Heart right ventricle (tissue), 16 donors: ENCODE measurements at regions of chrX and their contacts with region 1.

Region 1: GRCh38 chrX:153763989-153764755 is at the start of gene PLXNB3:
- DNase-seq: peak; percentile 62 to 77
- ATAC-seq: peak; percentile 74 to 93 (median 83)
- H3K4me3 ChIP-seq: peak within 1 kb of the TSS in 3 of 10 donors; percentile 23 to 33 (median 24)
- H3K27ac ChIP-seq: peak within 1 kb of the TSS in 7 of 10 donors; percentile 10 to 52 (median 39)
- H3K4me1 ChIP-seq: peaks cover 3 to 23% (median 15%) of the 10 kb centered on the region in 9 donors
- H3K27me3 ChIP-seq: peaks cover 0 to 11% (median 0%) of the 10 kb centered on the region in 7 donors
- CTCF ChIP-seq: peak; percentile 48 to 87 (median 75)
- total RNA-seq, gene PLXNB3: 2.1 to 5.8 (median 4.3) TPM

Region 2: DNA sequence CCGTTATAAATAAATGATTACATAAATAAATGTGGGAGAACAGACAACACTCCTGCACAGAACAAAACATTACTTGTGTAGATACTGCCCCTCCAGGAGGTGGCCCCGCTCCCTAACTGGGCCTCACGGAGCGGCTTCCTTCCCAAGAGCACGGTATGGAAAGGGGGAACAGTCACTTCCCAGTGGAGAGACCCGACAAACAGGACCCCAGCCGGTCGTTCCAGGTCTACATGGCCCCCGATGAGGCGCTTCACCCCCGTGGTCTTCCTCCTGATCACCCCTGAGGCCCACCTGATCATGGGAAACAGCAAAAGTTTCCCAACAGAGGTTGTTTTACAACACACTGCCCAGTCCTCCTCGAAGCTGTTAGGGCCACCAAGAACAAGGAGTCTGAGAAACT is 83.0 kb before region 1 on chrX:
- intact Hi-C with region 1: no loop called
- DNase-seq: no peak
- ATAC-seq: no peak
- H3K4me3 ChIP-seq: no peak overlapping the region
- H3K27ac ChIP-seq: no peak overlapping the region
- H3K4me1 ChIP-seq: no peaks in the 10 kb centered on the region
- H3K27me3 ChIP-seq: peaks cover 0 to 66% (median 0%) of the 10 kb centered on the region in 7 donors
- CTCF ChIP-seq: no peak

Region 3: DNA sequence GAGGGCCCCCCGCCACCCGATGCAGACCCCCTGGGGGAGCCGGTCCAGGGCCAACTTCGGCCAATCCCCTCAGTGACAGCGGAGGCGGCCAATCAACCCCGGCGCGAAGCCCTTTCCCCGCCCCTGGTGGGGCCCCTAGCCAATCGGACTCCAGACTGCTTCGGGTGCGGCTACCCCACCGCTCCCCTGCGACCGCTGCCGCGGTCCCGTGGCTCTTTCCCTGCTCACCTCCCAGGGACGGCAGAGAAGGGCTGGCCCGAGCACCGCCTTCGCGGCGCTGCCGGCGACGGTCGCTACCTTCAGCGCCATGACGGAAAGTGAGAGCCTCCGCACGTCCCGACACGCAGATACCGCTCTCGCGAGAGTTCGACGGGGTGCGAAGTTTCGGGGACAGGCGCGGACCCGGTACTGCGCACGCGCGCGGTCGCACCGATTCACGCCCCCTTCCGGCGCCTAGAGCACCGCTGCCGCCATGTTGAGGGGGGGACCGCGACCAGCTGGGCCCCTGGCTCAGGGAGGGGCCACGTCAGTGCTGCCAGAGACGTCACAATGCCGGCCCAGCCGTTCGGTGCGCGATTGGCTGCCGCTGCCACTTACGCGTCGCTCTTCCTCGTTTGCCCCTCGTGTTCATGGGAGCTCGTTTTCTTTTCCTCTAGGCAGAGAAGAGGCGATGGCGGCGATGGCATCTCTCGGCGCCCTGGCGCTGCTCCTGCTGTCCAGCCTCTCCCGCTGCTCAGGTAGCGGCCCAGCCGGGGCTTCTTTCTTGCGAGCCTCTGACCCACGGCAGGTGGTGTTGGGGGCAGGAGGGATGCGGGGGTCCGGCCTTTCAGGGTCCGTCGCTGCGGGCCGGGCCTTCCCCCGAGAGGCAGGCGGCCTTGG is 30.1 kb after region 1 on chrX and contains the starts of genes IDH3G and SSR4:
- intact Hi-C with region 1: loop called in 1 of 10 experiments (anchors 2 kb)
- DNase-seq: peak; percentile 91 to 93
- ATAC-seq: peak; percentile 93 to 97 (median 96)
- H3K4me3 ChIP-seq: peak within 1 kb of the TSS; percentile 53 to 80 (median 75)
- H3K27ac ChIP-seq: peak within 1 kb of the TSS; percentile 88 to 97 (median 94)
- H3K4me1 ChIP-seq: peaks cover 0 to 44% (median 26%) of the 10 kb centered on the region in 9 donors
- H3K27me3 ChIP-seq: no peaks in the 10 kb centered on the region
- CTCF ChIP-seq: peak in 7 of 9 donors; percentile 7 to 54 (median 31)
- total RNA-seq, gene IDH3G: 58.7 to 86.9 (median 74.5) TPM
- total RNA-seq, gene SSR4: 94.1 to 227 (median 144) TPM

Region 4: DNA sequence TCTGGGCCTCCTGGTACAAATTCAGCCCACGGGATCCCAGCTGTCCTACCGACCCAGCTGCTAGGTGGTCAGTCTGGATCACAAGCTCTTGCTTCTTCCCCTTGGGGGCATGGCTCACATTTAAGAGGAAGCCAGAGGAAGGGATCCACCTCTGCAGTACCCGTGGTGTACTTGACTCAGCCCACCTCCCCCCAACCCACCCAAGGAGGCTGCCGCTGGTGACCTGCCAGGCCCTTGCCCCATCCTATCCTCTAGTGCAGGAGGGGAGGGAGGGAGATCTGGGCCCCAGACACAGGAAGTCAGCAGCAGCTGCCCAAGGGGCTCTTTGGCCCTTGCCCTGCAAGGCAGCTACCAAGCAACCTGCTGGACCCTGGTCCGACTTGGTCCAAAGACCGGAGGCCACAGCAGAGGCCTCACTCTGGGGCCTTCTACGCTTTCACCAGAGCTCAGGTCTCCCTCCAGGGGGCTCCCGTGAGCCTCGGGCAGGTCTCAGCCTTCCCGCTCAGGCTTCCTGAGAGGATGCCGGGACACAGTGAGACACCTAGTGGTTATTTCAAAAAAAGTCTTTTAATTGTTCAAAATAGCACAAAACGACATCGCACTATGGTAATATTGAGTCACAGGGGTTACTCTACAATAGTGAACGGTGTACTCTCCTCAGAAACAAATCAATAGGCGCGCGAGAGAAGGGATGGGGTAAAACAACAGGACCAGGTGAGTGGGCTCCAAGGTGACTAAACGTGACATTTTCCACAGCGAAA is 183.0 kb after region 1 on chrX:
- intact Hi-C with region 1: loop called in 8 of 10 experiments (anchors 2 to 10 kb)
- DNase-seq: peak; percentile 64 to 73
- ATAC-seq: peak; percentile 48 to 81 (median 71)
- H3K4me3 ChIP-seq: no peak overlapping the region
- H3K27ac ChIP-seq: peak overlapping the region; percentile 11 to 78 (median 70)
- H3K4me1 ChIP-seq: peaks cover 0 to 40% (median 11%) of the 10 kb centered on the region in 9 donors
- H3K27me3 ChIP-seq: peaks cover 0 to 29% (median 0%) of the 10 kb centered on the region in 7 donors
- CTCF ChIP-seq: peak; percentile 62 to 91 (median 75)

Region 5: DNA sequence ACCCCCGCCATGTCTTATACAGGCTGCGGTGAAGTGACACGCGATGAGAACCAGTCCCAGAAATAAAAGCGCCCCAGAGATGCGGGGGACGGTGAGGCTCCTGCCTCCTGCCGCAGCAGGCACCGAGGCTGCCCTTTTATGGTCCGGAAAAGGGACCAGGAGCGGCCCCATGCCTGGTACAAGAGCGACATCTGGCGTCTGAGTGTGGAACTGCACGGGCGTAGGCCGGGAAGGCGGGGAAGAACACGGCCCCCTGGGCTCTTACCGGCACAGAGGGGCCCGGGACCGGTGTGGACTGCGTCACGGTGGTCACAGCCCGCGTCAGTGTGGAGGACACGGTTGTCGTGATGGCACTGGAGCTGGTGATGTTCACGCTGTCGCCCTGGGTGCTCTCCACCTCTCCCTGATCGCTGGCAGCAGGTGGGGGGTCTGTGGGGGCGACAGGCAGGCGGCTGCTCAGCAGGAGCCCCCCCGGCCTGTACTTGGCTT is 189.2 kb after region 1 on chrX:
- intact Hi-C with region 1: loop called (anchors 1 to 10 kb)
- DNase-seq: peak; percentile 56 to 68
- ATAC-seq: peak; percentile 59 to 76 (median 67)
- H3K4me3 ChIP-seq: no peak overlapping the region
- H3K27ac ChIP-seq: peak overlapping the region in 6 of 10 donors; percentile 8 to 69 (median 42)
- H3K4me1 ChIP-seq: peaks cover 0 to 28% (median 10%) of the 10 kb centered on the region in 9 donors
- H3K27me3 ChIP-seq: no peaks in the 10 kb centered on the region
- CTCF ChIP-seq: peak; percentile 84 to 100 (median 89)